ENCODE measurements at regions of chr11 and their contacts with region 1.

Region 1: GRCh38 chr11:122309262-122309925 is 193.4 kb upstream of the BLID start:
- DNase-seq: peak in 3 of 5 donors; percentile 23 to 35 (median 33)
- ATAC-seq: peak; percentile 82 to 96 (median 90)
- H3K4me3 ChIP-seq: peak overlapping the region; percentile 0 to 57 (median 46)
- H3K27ac ChIP-seq: peak overlapping the region in 11 of 12 donors; percentile 3 to 90 (median 62)
- H3K4me1 ChIP-seq: peaks cover 0 to 33% (median 3%) of the 10 kb centered on the region in 12 donors
- H3K27me3 ChIP-seq: no peaks in the 10 kb centered on the region
- CTCF ChIP-seq: no peak
- POLR2A ChIP-seq: peak in 1 of 2 donors; percentile 34

Region 2: GRCh38 chr11:121722431-121723245 is 586.8 kb before region 1 on chr11:
- intact Hi-C with region 1: no loop called
- DNase-seq: peak; percentile 78 to 90 (median 86)
- ATAC-seq: peak; percentile 91 to 97 (median 96)
- H3K4me3 ChIP-seq: peak overlapping the region in 11 of 12 donors; percentile 30 to 61 (median 50)
- H3K27ac ChIP-seq: peak overlapping the region; percentile 49 to 91 (median 84)
- H3K4me1 ChIP-seq: peaks cover 0 to 16% (median 4%) of the 10 kb centered on the region in 12 donors
- H3K27me3 ChIP-seq: peaks cover 0 to 7% (median 0%) of the 10 kb centered on the region in 9 donors
- CTCF ChIP-seq: peak in 5 of 12 donors; percentile 9 to 30 (median 12)
- POLR2A ChIP-seq: no peak

Region 3: GRCh38 chr11:122334546-122335339 is 25.3 kb after region 1 on chr11:
- intact Hi-C with region 1: loop called in 1 of 10 experiments (anchors 2 kb)
- DNase-seq: peak in 1 of 5 donors; percentile 23
- ATAC-seq: peak in 3 of 4 donors; percentile 22 to 62 (median 45)
- H3K4me3 ChIP-seq: peak overlapping the region in 1 of 12 donors; percentile 10
- H3K27ac ChIP-seq: peak overlapping the region in 1 of 12 donors; percentile 51
- H3K4me1 ChIP-seq: peaks cover 0 to 46% (median 3%) of the 10 kb centered on the region in 12 donors
- H3K27me3 ChIP-seq: no peaks in the 10 kb centered on the region
- CTCF ChIP-seq: no peak
- POLR2A ChIP-seq: no peak

Region 4: GRCh38 chr11:122345586-122345985 is 36.2 kb after region 1 on chr11:
- intact Hi-C with region 1: loop called in 1 of 10 experiments (anchors 5 kb)
- DNase-seq: no peak
- ATAC-seq: no peak
- H3K4me3 ChIP-seq: no peak overlapping the region
- H3K27ac ChIP-seq: no peak overlapping the region
- H3K4me1 ChIP-seq: peaks cover 0 to 54% (median 8%) of the 10 kb centered on the region in 12 donors
- H3K27me3 ChIP-seq: no peaks in the 10 kb centered on the region
- CTCF ChIP-seq: no peak
- POLR2A ChIP-seq: no peak

Region 5: DNA sequence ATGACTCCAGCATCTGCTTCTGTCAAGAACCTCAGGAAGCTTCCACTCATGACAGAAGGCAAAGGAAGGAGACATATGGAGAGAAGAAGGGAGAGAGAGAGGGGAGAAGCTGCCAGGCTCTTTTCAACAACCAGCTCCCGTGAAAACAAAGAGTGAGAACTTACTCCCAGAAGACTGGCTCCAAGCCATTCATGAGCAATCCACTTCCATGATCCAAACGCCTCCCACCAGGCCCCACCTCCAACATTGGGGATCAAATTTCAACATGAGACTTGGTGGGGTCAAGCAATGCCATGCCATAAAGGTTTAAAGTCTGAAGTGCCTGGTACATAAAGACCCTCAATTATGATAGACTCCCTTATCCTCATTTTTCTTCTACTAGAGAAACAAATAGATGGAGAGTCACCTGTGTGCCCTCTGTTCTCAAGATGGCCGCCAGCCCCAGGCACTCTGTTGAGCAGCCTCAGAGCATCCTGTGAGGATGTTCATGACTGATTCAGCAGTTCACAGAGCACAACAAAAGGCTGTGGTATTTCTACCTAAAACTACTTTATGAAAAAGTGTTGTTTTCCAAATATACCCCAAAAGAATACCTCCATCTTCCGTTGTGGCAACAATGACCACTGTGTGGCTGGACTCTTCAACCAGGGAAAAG is 459.9 kb after region 1 on chr11:
- intact Hi-C with region 1: no loop called
- DNase-seq: no peak
- ATAC-seq: no peak
- H3K4me3 ChIP-seq: no peak overlapping the region
- H3K27ac ChIP-seq: no peak overlapping the region
- H3K4me1 ChIP-seq: peaks cover 0 to 14% (median 3%) of the 10 kb centered on the region in 12 donors
- H3K27me3 ChIP-seq: no peaks in the 10 kb centered on the region
- CTCF ChIP-seq: no peak
- POLR2A ChIP-seq: no peak